ENCODE measurements at regions of chr17 and their contacts with region 1.

Region 1: DNA sequence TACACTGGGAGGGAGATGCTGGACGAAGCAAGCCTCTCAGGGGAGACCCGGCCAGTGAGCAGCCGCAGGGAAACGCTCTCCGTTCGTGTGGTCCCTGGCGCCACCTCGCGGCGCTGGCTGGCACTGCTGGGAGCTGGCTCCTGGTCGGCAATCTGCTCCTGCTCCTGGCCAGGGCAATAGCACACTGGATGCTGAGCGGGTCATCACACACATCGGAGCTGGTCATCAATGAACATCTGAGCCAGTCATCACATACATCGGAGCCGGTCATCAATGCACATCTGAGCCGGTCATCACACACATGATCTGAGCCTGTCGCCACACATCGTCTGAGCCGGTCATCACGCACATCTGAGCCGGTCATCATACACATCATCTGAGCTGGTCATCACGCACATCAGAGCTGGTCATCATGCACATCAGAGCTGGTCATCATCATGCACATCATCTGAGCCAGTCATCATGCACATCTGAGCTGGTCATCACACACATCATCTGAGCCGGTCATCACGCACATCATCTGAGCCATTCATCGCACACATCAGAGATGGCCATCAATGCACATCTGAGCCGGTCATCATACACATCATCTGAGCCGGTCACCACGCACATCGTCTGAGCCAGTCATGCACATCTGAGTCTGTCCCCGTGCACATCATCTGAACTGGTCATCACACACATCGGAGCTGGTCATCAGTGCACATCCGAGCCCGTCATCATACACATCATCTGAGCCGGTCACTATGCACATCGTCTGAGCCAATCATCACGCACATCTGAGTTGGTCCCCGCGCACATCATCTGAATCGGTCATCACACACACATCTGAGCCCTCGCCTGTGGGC is 217.3 kb downstream of the RBFOX3 start:
- DNase-seq: peak; percentile 75 to 85 (median 80)
- ATAC-seq: peak; percentile 92
- H3K4me3 ChIP-seq: no peak overlapping the region
- H3K27ac ChIP-seq: no peak overlapping the region
- H3K4me1 ChIP-seq: no peaks in the 10 kb centered on the region
- H3K27me3 ChIP-seq: peaks cover 16 to 92% of the 10 kb centered on the region in 2 experiments
- CTCF ChIP-seq: peak; percentile 90 to 95 (median 92)
- EP300 ChIP-seq: no peak
- POLR2A ChIP-seq: no peak
- RAD21 ChIP-seq: peak; percentile 73 to 87

Region 2: GRCh38 chr17:79074650-79075445 is 318.7 kb before region 1 on chr17 and contains the start of gene ENGASE:
- CTCF ChIA-PET with region 1: no interaction called
- POLR2A ChIA-PET with region 1: no interaction called
- in situ Hi-C with region 1: loop called (anchors 25 kb)
- intact Hi-C with region 1: no loop called
- DNase-seq: peak; percentile 95 to 97 (median 96)
- ATAC-seq: peak; percentile 100
- H3K4me3 ChIP-seq: peak within 1 kb of the TSS; percentile 83
- H3K27ac ChIP-seq: peak within 1 kb of the TSS; percentile 72
- H3K4me1 ChIP-seq: peaks cover 8 to 14% of the 10 kb centered on the region in 2 experiments; a peak in 4 of 5 replicates
- H3K27me3 ChIP-seq: peaks cover 8 to 11% of the 10 kb centered on the region in 2 experiments; a peak in 4 of 5 replicates
- CTCF ChIP-seq: no peak
- EP300 ChIP-seq: no peak
- POLR2A ChIP-seq: peak; percentile 67; the same call in 1 of the 2 replicates
- RAD21 ChIP-seq: no peak
- polyA plus RNA-seq, gene ENGASE: 0.06 to 0.14 TPM

Region 3: DNA sequence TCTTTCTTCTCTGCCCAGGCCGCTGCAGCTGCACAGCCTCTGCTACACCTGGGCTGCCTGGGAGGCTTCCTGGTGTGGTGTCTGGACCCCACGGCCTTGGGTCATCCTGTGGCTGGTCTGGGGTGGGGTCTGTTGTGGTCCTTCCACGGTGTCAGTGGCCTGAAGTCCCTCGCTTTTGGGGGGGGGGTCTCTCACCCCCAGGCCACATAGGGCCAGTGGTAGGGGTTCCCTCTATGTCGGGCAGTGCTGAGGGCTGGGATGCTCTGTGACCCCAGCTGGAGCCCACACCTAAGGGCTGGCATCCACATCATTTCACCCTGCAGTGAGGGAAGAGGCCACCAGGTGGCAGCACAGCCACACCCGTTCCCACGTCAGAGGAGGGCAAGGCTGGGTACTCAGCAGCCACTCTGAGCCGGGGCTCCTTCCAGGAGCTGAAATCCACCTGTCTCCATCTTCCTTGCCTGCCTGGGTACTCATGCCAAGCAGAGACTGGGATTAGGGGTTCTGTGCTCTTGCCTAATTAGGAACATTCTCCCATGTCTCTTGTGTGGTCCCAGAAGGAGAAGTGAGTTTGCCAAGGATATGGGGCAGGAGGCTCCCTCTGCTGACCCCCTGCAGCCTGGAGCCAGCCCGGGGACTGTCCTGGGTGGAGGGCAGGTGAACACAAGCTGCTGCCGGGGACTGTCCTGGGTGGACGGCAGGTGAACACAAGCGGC is 306.0 kb before region 1 on chr17:
- CTCF ChIA-PET with region 1: interaction called, 8 read pairs
- POLR2A ChIA-PET with region 1: interaction called, 3 read pairs
- in situ Hi-C with region 1: no loop called
- intact Hi-C with region 1: loop called (anchors 1 kb)
- DNase-seq: peak; percentile 70 to 78 (median 74)
- ATAC-seq: peak; percentile 86
- H3K4me3 ChIP-seq: no peak overlapping the region
- H3K27ac ChIP-seq: no peak overlapping the region
- H3K4me1 ChIP-seq: peaks cover 0 to 40% of the 10 kb centered on the region in 2 experiments; a peak in 2 of 5 replicates
- H3K27me3 ChIP-seq: peaks cover 2 to 16% of the 10 kb centered on the region in 2 experiments; a peak in 3 of 5 replicates
- CTCF ChIP-seq: peak; percentile 82 to 86 (median 82)
- EP300 ChIP-seq: no peak
- POLR2A ChIP-seq: no peak
- RAD21 ChIP-seq: peak in 1 of 2 experiments; percentile 78; a peak in 3 of 4 replicates

Region 4: GRCh38 chr17:79188048-79188447 is 205.5 kb before region 1 on chr17:
- CTCF ChIA-PET with region 1: interaction called, 7 read pairs
- POLR2A ChIA-PET with region 1: no interaction called
- in situ Hi-C with region 1: loop called (anchors 5 kb)
- intact Hi-C with region 1: loop called (anchors 2 kb)
- DNase-seq: peak; percentile 37 to 72 (median 72)
- ATAC-seq: peak; percentile 91
- H3K4me3 ChIP-seq: no peak overlapping the region
- H3K27ac ChIP-seq: no peak overlapping the region
- H3K4me1 ChIP-seq: peaks cover 0 to 6% of the 10 kb centered on the region in 2 experiments; a peak in 2 of 5 replicates
- H3K27me3 ChIP-seq: peaks cover 4 to 73% of the 10 kb centered on the region in 2 experiments; a peak in 4 of 5 replicates
- CTCF ChIP-seq: peak; percentile 63 to 75 (median 66); a peak in 5 of 6 replicates
- EP300 ChIP-seq: no peak
- POLR2A ChIP-seq: no peak
- RAD21 ChIP-seq: peak; percentile 41 to 78; a peak in 3 of 4 replicates

Region 5: GRCh38 chr17:80339118-80339517 is 945.5 kb after region 1 on chr17:
- CTCF ChIA-PET with region 1: no interaction called
- POLR2A ChIA-PET with region 1: no interaction called
- in situ Hi-C with region 1: no loop called
- intact Hi-C with region 1: no loop called
- DNase-seq: no peak
- ATAC-seq: no peak
- H3K4me3 ChIP-seq: no peak overlapping the region
- H3K27ac ChIP-seq: no peak overlapping the region
- H3K4me1 ChIP-seq: no peaks in the 10 kb centered on the region; a peak in 1 of 5 replicates
- H3K27me3 ChIP-seq: no peaks in the 10 kb centered on the region
- CTCF ChIP-seq: no peak
- EP300 ChIP-seq: no peak
- POLR2A ChIP-seq: no peak
- RAD21 ChIP-seq: no peak

Measured in K562 (cell line).